A549 (cell line): ENCODE measurements at regions of chr21 and their contacts with region 1.

Region 1: DNA sequence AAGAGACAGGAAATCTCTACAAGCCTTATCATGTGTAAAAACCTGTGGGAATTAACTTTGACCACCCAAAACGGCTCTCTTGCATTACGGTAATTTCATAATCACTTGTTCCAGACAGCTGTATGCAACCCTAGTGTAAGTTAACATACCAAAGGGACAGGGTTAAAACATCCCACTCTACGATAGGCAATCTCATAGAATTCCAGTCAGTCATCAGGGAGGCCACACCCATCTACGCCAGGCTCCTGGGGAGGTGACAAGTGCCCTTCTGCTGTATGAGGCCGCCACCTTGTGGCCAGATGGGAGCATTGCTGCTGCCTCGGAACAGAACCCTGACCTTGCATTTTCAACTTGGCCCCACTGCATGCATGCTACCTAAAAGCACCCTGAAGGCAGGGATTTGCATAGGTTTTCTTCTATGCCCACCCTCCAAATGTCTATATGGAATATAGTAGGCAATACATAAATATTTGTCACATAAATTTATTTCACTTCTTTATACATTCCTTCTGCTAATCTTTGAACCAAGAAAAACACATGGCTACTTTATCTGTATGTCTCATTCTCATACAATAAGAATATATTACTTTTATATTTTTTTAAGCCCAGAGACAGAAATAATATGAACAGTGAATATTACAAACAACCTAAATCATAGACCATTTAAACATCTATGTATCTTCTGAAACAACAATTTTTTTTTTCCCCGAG is 12.6 kb downstream of the HSF2BP start:
- DNase-seq: peak; percentile 85 to 97
- ATAC-seq: peak; percentile 95 to 99
- H3K4me3 ChIP-seq: no peak overlapping the region
- H3K27ac ChIP-seq: peak overlapping the region; percentile 97 to 98
- H3K4me1 ChIP-seq: peaks cover 31% of the 10 kb centered on the region
- CTCF ChIP-seq: peak; percentile 85
- EP300 ChIP-seq: peak; percentile 82 to 85; a peak in 3 of 5 replicates
- POLR2A ChIP-seq: no peak
- RAD21 ChIP-seq: peak; percentile 96 to 99

Region 2: DNA sequence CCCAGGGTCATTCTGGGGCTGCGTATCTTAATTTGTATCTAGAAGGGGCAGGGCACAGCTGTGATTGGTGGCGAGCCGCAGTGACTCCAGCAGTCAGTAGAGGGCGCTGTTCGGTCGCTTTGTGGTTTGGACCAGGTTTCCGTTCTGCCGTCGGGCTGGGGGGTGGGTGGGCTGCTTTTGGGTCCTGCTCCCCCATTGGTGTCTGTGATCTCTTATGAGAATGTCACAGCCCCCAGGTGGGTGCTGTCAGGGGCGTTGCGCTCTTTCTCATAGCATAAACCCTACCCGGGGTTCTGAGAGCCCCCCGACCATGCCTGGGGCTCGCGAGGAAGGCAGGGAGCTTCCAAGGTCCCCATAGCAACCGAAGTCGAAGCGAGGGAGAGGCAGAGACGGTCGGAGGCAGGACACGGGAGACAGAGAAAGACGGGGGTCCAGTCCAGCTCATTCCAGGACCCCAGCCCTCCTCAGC is 1336.9 kb before region 1 on chr21:
- CTCF ChIA-PET with region 1: no interaction called
- POLR2A ChIA-PET with region 1: no interaction called
- DNase-seq: peak; percentile 11 to 33
- ATAC-seq: peak; percentile 48 to 85; a peak in 4 of 6 replicates
- H3K4me3 ChIP-seq: no peak overlapping the region
- H3K27ac ChIP-seq: no peak overlapping the region
- H3K4me1 ChIP-seq: no peaks in the 10 kb centered on the region
- CTCF ChIP-seq: peak; percentile 52
- EP300 ChIP-seq: no peak
- POLR2A ChIP-seq: no peak
- RAD21 ChIP-seq: peak; percentile 62 to 65

Region 3: GRCh38 chr21:43340491-43341377 is 306.0 kb before region 1 on chr21:
- CTCF ChIA-PET with region 1: interaction called, 15 read pairs
- POLR2A ChIA-PET with region 1: interaction called, 5 read pairs
- DNase-seq: peak; percentile 62 to 98
- ATAC-seq: peak; percentile 33 to 55
- H3K4me3 ChIP-seq: no peak overlapping the region
- H3K27ac ChIP-seq: peak overlapping the region; percentile 100
- H3K4me1 ChIP-seq: peaks cover 68% of the 10 kb centered on the region
- CTCF ChIP-seq: no peak
- EP300 ChIP-seq: peak; percentile 92 to 93; a peak in 4 of 5 replicates
- POLR2A ChIP-seq: no peak
- RAD21 ChIP-seq: peak in 1 of 2 experiments; percentile 19; a peak in 1 of 5 replicates

Region 4: GRCh38 chr21:43603641-43604496 is 42.8 kb before region 1 on chr21:
- CTCF ChIA-PET with region 1: interaction called, 13 read pairs
- POLR2A ChIA-PET with region 1: interaction called, 4 read pairs
- DNase-seq: peak in 1 of 2 experiments; percentile 44
- ATAC-seq: peak; percentile 24 to 29; a peak in 4 of 6 replicates
- H3K4me3 ChIP-seq: no peak overlapping the region
- H3K27ac ChIP-seq: peak overlapping the region; percentile 83 to 91
- H3K4me1 ChIP-seq: peaks cover 61% of the 10 kb centered on the region
- CTCF ChIP-seq: no peak
- EP300 ChIP-seq: no peak
- POLR2A ChIP-seq: no peak; the same call in 1 of the 2 replicates
- RAD21 ChIP-seq: no peak

Region 5: DNA sequence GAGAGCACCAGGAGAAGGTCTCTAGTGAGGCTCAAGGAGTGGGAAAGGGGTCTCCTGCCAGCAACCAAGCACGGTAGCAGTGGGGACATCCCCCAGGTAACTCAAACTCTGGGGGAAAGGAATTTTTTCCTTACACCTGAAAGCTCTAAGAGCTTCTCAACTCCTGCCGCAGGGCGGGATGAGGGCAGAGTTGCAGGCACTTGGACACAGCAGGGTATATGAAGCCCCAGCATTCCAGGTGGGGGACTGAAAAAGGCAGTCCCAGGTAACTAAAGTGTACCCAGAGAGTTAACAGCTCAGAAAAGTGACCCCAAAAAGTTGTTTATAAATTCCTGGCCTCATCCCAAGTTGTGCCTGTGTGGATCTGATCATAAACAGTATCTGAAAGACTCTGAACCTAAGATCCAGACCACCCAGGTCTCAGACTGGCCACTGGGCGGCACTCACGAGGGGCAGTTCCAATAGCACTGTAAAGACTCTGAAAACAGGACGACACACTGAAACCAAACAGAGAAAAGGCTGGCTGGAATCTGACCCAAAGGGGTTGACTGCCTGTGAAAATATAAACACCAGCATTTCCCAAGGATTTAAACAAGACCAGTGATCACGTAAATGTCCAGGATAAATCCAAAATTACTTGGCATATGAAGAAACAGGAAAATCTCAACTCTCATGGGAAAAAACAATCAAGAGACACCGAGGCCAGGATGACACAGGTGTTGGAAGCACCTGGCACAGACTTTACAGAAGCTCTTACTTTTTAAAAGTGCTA is 34.9 kb before region 1 on chr21:
- CTCF ChIA-PET with region 1: interaction called, 49 read pairs
- POLR2A ChIA-PET with region 1: interaction called, 4 read pairs
- DNase-seq: peak; percentile 58 to 83
- ATAC-seq: peak; percentile 93 to 97
- H3K4me3 ChIP-seq: no peak overlapping the region
- H3K27ac ChIP-seq: peak overlapping the region; percentile 92
- H3K4me1 ChIP-seq: peaks cover 51% of the 10 kb centered on the region
- CTCF ChIP-seq: peak; percentile 68
- EP300 ChIP-seq: no peak
- POLR2A ChIP-seq: no peak
- RAD21 ChIP-seq: peak; percentile 69 to 74

Region 6: DNA sequence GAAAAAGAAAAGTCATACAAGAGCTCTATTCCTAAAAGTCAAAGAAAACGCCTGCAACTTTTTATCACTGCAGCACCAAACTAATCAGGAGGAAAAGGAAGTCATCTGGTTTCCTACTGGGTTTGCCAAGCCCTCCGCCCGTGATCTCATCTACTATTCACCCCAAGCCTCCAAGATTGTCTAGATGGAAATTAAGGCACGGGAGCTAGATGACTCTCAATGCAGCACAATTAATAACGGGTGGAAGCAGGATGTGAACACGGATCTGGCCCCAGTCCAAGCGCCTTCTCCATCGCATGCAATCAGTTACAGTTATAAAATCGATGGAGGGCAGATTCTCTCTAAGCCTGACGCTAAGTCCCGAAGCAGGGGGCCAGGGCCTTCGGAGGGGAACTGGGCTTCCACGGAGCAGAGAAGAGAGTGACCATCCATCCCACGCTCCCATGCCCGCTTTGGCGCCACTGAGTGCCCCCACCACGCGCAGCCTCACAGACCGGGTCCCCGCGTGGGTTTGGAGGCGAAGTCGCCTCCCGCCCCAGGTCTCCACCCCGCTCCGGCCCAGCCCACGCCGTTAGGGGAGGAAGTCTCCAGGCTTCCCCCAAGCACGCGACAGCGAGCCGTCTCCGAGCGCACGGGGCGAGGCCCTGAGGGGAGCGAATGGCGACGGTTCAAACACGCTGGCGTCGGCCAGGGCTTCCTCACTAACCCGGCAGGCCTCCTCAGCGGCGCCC is 10.8 kb after region 1 on chr21:
- CTCF ChIA-PET with region 1: interaction called, 13 read pairs
- POLR2A ChIA-PET with region 1: no interaction called
- DNase-seq: no peak
- ATAC-seq: no peak
- H3K4me3 ChIP-seq: no peak overlapping the region
- H3K27ac ChIP-seq: no peak overlapping the region; a peak in 1 of 6 replicates
- H3K4me1 ChIP-seq: peaks cover 34% of the 10 kb centered on the region; the same call in 2 of the 3 replicates
- CTCF ChIP-seq: no peak
- EP300 ChIP-seq: no peak
- POLR2A ChIP-seq: no peak
- RAD21 ChIP-seq: no peak

Region 7: DNA sequence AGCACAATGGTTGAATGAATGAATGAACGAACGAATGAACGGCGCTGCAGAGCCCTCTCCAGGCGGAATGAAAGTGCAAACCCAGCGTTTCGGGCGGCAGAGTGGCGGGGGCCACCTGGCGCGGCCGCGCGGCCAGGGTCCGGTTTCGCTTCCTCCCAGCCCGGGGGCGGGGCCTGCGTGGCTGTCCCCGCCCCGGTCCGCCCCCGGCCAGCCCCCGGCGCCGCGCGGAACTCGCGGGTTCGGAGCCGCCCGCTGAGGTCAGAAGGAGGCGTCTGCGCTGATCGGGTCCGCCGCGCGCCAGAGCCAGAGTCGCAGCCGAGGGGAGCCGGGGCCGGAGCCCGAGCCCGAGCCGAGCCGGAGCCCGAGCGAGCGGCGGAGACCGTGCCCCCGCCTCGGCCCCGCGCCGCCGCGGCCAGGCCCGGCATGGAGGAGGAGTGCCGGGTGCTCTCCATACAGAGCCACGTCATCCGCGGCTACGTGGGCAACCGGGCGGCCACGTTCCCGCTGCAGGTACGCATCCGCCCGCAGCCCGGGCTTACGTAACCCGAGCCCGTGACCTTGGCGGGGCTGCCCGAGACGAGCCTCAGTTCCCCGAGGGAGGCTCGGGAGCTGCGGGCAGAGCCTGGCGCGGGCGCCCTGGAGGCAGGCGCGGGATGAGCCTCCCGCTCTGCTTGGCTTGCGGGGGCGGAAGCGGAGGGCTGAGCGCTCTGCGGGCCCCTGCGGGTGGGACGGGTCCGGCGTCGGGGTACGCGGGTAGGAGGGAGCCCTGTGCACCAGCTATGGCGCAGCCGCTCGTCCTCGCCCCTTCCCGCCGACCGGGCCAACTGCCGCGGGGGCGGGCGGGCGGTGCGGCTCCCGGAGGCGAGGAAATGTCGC is 72.4 kb after region 1 on chr21 and contains the start of gene PDXK:
- CTCF ChIA-PET with region 1: no interaction called
- POLR2A ChIA-PET with region 1: no interaction called
- DNase-seq: peak; percentile 38 to 76
- ATAC-seq: peak; percentile 80 to 87
- H3K4me3 ChIP-seq: peak within 1 kb of the TSS; percentile 97
- H3K27ac ChIP-seq: peak within 1 kb of the TSS; percentile 100
- H3K4me1 ChIP-seq: peaks cover 55% of the 10 kb centered on the region
- CTCF ChIP-seq: peak; percentile 14; the same call in 1 of the 3 replicates
- EP300 ChIP-seq: no peak
- POLR2A ChIP-seq: peak; percentile 54
- RAD21 ChIP-seq: peak; percentile 21 to 41; a peak in 2 of 5 replicates
- polyA plus RNA-seq, gene PDXK: 252 and 292 TPM in 2 replicates